ENCODE measurements at regions of chr1 and their contacts with region 1.

Region 1: GRCh38 chr1:26417111-26417759 is 6.6 kb downstream of the LIN28A start:
- DNase-seq: peak; percentile 57 to 81 (median 76)
- ATAC-seq: peak; percentile 99
- H3K4me3 ChIP-seq: no peak overlapping the region
- H3K4me3 Mint-ChIP-seq: no peak overlapping the region
- H3K27ac ChIP-seq: no peak overlapping the region
- H3K27ac Mint-ChIP-seq: no peak overlapping the region
- H3K4me1 ChIP-seq: no peaks in the 10 kb centered on the region
- H3K4me1 Mint-ChIP-seq: peaks cover 0 to 3% (median 0%) of the 10 kb centered on the region in 7 donors
- H3K27me3 ChIP-seq: peaks cover 0 to 3% of the 10 kb centered on the region in 2 donors
- H3K27me3 Mint-ChIP-seq: peaks cover 17 to 65% (median 19%) of the 10 kb centered on the region in 5 donors

Region 2: DNA sequence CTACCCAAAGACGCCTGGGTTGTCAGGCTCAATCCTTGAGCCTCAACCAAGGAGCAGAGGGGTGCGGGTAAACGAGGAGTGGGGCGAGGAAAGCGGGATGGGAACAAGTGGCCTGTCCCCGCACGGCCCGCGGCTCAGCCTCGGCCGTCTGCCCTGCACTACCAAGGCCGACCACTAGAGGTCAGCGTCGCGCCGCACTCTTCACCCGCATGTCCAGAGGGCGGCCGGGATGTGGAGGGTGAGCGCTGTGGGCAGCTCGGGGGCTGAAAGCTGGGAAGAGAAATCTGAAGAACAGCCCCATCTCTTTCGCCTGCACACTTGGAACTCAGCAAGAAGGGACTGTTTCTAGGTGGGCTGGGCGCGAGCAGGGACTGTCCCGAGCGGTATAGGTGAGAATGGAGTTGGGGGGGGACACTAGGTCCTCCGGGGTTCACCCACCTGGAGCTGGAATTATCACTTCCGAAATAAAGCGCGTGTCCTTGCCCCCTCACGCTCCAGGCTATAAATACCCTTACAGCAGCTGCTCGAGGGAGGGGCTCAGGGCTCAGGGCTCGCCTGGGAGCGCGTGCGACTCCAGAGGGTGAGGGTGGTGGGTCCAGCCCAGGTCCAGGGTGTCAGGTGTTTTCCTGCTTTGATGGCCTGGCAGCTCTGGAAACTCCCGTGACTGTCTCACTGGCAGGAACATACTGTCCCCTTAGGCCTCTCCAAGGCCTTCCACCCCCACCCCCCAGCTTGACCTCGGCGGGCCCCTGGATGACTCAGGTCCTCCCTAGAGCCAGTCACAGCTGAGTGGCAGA is 381.1 kb before region 1 on chr1:
- CTCF ChIA-PET with region 1: no interaction called
- POLR2A ChIA-PET with region 1: no interaction called
- intact Hi-C with region 1: loop called in 1 of 2 experiments (anchors 5 kb)
- DNase-seq: peak; percentile 53 to 89 (median 73)
- ATAC-seq: peak; percentile 87
- H3K4me3 ChIP-seq: peak overlapping the region; percentile 99
- H3K4me3 Mint-ChIP-seq: peak overlapping the region; percentile 93 to 97 (median 96)
- H3K27ac ChIP-seq: peak overlapping the region; percentile 87
- H3K27ac Mint-ChIP-seq: peak overlapping the region; percentile 74 to 96 (median 90)
- H3K4me1 ChIP-seq: peaks cover 5 to 6% of the 10 kb centered on the region in 2 donors
- H3K4me1 Mint-ChIP-seq: peaks cover 0 to 15% (median 8%) of the 10 kb centered on the region in 7 donors
- H3K27me3 ChIP-seq: no peaks in the 10 kb centered on the region
- H3K27me3 Mint-ChIP-seq: peaks cover 0 to 19% (median 0%) of the 10 kb centered on the region in 5 donors

Region 3: GRCh38 chr1:26169669-26170471 is 247.4 kb before region 1 on chr1 and contains the start of gene ZNF593:
- CTCF ChIA-PET with region 1: interaction called, 6 read pairs
- POLR2A ChIA-PET with region 1: no interaction called
- intact Hi-C with region 1: loop called in 1 of 2 experiments (anchors 1 kb)
- DNase-seq: peak; percentile 52 to 92 (median 69)
- ATAC-seq: peak; percentile 96
- H3K4me3 ChIP-seq: peak within 1 kb of the TSS; percentile 72
- H3K4me3 Mint-ChIP-seq: peak within 1 kb of the TSS; percentile 83 to 90 (median 88)
- H3K27ac ChIP-seq: peak within 1 kb of the TSS; percentile 86
- H3K27ac Mint-ChIP-seq: peak within 1 kb of the TSS; percentile 48 to 91 (median 77)
- H3K4me1 ChIP-seq: peaks cover 7 to 10% of the 10 kb centered on the region in 2 donors
- H3K4me1 Mint-ChIP-seq: peaks cover 0 to 33% (median 15%) of the 10 kb centered on the region in 7 donors
- H3K27me3 ChIP-seq: no peaks in the 10 kb centered on the region
- H3K27me3 Mint-ChIP-seq: peaks cover 0 to 21% (median 0%) of the 10 kb centered on the region in 5 donors
- total RNA-seq, gene ZNF593: 7.8 to 36.3 (median 9.6) TPM

Region 4: GRCh38 chr1:26284597-26285360 is 132.5 kb before region 1 on chr1:
- CTCF ChIA-PET with region 1: interaction called, 10 read pairs
- POLR2A ChIA-PET with region 1: interaction called, 10 read pairs
- intact Hi-C with region 1: loop called in 1 of 2 experiments (anchors 2 kb)
- DNase-seq: peak; percentile 60 to 97 (median 87)
- ATAC-seq: peak; percentile 81
- H3K4me3 ChIP-seq: peak overlapping the region; percentile 18
- H3K4me3 Mint-ChIP-seq: peak overlapping the region; percentile 44 to 88 (median 76)
- H3K27ac ChIP-seq: peak overlapping the region; percentile 86
- H3K27ac Mint-ChIP-seq: peak overlapping the region; percentile 90 to 99 (median 97)
- H3K4me1 ChIP-seq: peaks cover 89 to 91% of the 10 kb centered on the region in 2 donors
- H3K4me1 Mint-ChIP-seq: peaks cover 62 to 94% (median 86%) of the 10 kb centered on the region in 7 donors
- H3K27me3 ChIP-seq: no peaks in the 10 kb centered on the region
- H3K27me3 Mint-ChIP-seq: no peaks in the 10 kb centered on the region

Region 5: GRCh38 chr1:26378088-26378878 is 39.0 kb before region 1 on chr1:
- CTCF ChIA-PET with region 1: interaction called, 13 read pairs
- POLR2A ChIA-PET with region 1: interaction called, 6 read pairs
- intact Hi-C with region 1: loop called in 1 of 2 experiments (anchors 1 kb)
- DNase-seq: peak; percentile 47 to 77 (median 70)
- ATAC-seq: peak; percentile 98
- H3K4me3 ChIP-seq: peak overlapping the region; percentile 35
- H3K4me3 Mint-ChIP-seq: peak overlapping the region; percentile 64 to 85 (median 74)
- H3K27ac ChIP-seq: peak overlapping the region; percentile 56
- H3K27ac Mint-ChIP-seq: peak overlapping the region; percentile 48 to 93 (median 92)
- H3K4me1 ChIP-seq: peaks cover 57 to 64% of the 10 kb centered on the region in 2 donors
- H3K4me1 Mint-ChIP-seq: peaks cover 57 to 74% (median 70%) of the 10 kb centered on the region in 7 donors
- H3K27me3 ChIP-seq: no peaks in the 10 kb centered on the region
- H3K27me3 Mint-ChIP-seq: no peaks in the 10 kb centered on the region

Region 6: DNA sequence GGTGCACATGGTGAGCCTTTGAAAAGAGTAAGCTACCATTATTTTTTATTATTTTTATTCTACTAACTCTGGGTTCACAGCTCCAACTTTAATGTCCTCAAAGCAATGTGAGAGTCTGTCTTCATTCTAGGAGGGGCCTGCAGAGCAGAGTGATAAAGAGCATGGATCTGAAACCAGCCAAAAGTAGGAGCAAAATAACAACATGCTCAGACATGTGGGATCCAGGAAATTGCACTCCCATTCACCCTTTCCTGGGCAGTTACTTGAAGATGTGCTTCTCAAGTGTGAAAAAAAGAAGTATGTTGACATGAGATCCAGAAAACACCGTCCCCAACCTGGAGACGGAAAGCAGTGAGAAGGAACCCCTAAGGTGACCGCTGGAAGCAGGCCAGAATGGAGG is 15.3 kb before region 1 on chr1:
- CTCF ChIA-PET with region 1: interaction called, 11 read pairs
- POLR2A ChIA-PET with region 1: interaction called, 5 read pairs
- intact Hi-C with region 1: no loop called
- DNase-seq: no peak
- ATAC-seq: no peak
- H3K4me3 ChIP-seq: no peak overlapping the region
- H3K4me3 Mint-ChIP-seq: no peak overlapping the region
- H3K27ac ChIP-seq: no peak overlapping the region
- H3K27ac Mint-ChIP-seq: no peak overlapping the region
- H3K4me1 ChIP-seq: no peaks in the 10 kb centered on the region
- H3K4me1 Mint-ChIP-seq: no peaks in the 10 kb centered on the region
- H3K27me3 ChIP-seq: no peaks in the 10 kb centered on the region
- H3K27me3 Mint-ChIP-seq: peaks cover 6 to 53% (median 19%) of the 10 kb centered on the region in 5 donors

Measured in naive thymus-derived CD4-positive, alpha-beta T cell (primary cell).